Ascending aorta (tissue), 2 donors: ENCODE measurements at regions of chr16 and their contacts with region 1.

Region 1: DNA sequence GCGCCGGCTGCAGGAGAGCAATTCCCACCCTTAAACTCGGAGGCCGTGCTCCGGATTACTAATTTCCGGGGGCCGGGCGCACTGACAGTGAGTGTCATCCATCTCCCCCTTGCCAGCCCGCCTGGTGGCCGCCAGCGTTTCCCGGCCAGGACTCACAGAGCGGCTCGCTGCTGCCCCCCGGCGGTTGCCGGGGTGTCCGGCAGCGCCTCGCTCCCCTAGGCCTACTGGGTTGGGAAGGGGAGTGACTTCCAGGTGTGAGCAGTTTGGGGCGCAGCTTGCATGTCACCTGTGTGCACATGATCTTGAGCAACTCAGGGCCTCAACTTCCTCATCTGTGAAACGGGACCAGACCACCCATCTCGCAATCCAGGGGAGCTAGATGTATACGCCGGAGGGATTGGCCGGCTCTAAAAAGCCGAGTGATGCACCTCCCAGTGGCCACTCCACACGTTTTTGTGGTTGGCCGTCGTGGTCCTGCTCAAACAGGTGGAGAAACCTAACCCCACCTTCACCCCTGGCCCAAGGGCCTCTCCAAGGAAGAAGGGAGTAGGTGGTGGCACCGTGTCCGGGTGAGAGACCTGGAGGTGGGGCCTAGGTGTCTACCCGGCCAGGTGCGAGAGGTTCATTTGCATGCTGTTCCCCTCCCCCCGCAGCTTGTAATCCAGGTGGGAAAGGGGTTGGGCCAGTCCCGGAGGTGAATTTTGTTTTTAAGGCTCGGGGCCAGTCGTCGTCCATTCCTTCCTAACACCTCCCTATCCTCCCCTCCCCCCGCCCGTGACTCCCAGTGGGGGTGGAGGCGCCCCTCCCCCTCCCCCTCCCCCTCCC is 2.4 kb upstream of the GSE1 start:
- DNase-seq: peak; percentile 40 to 93
- H3K4me3 ChIP-seq: peak overlapping the region; percentile 64 to 83
- H3K27ac ChIP-seq: peak overlapping the region; percentile 91 to 92
- H3K4me1 ChIP-seq: peaks cover 17 to 46% of the 10 kb centered on the region in 2 donors
- H3K27me3 ChIP-seq: no peaks in the 10 kb centered on the region
- CTCF ChIP-seq: peak; percentile 98 to 99 (median 99)

Region 2: DNA sequence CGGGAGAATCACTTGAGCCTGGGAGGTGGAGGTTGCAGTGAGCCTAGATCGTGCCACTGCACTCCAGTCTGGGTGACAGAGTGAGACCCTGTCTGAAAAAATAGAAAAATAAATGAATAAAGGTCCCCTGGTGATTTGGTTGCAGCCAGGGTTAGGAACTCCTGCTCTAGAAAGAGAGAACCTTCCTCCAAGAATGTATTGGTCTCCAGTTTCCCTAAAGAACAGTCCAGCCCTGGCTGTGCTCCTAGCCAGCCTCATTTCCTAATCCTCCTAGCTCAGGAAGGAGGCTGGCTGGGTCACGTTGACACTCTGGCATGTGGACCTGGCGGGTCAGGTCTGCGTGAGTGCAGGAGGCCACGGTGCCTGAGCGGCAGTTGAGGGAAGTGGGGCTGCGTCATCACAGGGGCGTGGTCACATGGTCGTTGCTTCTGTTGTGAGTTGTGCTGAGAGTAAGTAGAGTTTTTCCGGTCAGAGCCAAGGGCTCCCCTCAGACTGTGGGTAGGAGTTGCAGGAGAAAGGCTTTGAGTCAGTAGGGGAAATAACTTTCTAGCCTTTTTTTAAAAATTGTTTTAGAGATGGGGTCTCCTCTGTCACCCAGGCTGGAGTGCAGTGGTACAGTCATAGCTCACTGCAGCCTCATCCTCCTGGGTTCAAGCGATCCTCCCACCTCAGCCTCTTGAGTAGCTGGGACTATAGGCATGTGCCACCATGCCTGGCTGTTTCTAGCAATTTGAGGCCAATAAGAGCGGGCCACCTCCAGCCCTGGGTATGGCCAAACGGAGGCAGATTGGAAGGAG is 304.5 kb before region 1 on chr16:
- intact Hi-C with region 1: loop called (anchors 5 kb)
- DNase-seq: peak; percentile 87 to 96
- H3K4me3 ChIP-seq: no peak overlapping the region
- H3K27ac ChIP-seq: peak overlapping the region; percentile 27 to 49
- H3K4me1 ChIP-seq: peaks cover 3 to 29% of the 10 kb centered on the region in 2 donors
- H3K27me3 ChIP-seq: no peaks in the 10 kb centered on the region
- CTCF ChIP-seq: no peak

Region 3: GRCh38 chr16:85393674-85394483 is 216.8 kb before region 1 on chr16:
- intact Hi-C with region 1: loop called (anchors 1 kb)
- DNase-seq: peak in 1 of 2 donors; percentile 67
- H3K4me3 ChIP-seq: no peak overlapping the region
- H3K27ac ChIP-seq: peak overlapping the region in 1 of 2 donors; percentile 9
- H3K4me1 ChIP-seq: peaks cover 17 to 26% of the 10 kb centered on the region in 2 donors
- H3K27me3 ChIP-seq: no peaks in the 10 kb centered on the region
- CTCF ChIP-seq: peak; percentile 63 to 69 (median 67)

Region 4: DNA sequence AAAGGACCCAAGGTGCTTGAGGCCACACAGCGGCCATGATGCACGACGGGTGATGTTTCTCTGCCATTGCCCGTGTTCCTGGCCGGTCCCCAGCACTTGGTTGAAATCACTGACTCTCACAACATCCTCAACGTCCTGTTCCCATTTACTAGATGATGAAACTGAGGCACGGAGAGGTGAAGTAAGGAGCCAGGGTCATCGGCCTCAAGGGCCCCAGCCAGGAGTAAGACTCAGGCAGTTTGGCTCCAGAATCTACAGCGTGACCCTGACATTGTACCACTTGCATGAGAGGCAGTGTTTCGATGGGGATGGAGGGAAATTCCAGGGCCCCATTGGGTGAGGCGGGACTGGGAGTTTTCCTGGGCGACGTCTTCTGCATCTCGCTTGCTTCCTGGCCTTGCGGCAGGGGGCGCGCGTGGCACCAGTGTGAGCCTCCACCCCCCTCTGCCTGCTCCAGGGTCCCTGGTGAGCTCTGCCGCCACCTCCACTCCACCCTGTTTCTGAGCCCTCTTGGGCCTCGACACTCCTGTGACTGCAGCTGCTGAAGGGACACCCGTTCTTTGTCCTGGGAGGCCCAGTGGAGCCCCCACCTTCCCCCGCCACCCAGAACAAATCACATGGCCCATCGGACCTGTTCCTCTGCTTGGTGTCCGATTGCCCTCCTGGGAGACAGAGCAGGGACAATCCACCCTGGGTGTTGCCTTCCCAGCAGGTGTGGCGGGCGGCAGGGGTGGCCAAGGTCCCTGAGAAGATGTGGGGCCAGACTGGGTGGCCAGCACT is 130.6 kb before region 1 on chr16:
- intact Hi-C with region 1: loop called (anchors 1 kb)
- DNase-seq: no peak
- H3K4me3 ChIP-seq: no peak overlapping the region
- H3K27ac ChIP-seq: no peak overlapping the region
- H3K4me1 ChIP-seq: peaks cover 0 to 3% of the 10 kb centered on the region in 2 donors
- H3K27me3 ChIP-seq: no peaks in the 10 kb centered on the region
- CTCF ChIP-seq: peak; percentile 18 to 47 (median 19)

Region 5: GRCh38 chr16:85554112-85554813 is 56.5 kb before region 1 on chr16:
- intact Hi-C with region 1: loop called (anchors 1 kb)
- DNase-seq: peak; percentile 54 to 86
- H3K4me3 ChIP-seq: peak overlapping the region; percentile 76 to 96
- H3K27ac ChIP-seq: peak overlapping the region; percentile 72 to 89
- H3K4me1 ChIP-seq: peaks cover 0 to 16% of the 10 kb centered on the region in 2 donors
- H3K27me3 ChIP-seq: no peaks in the 10 kb centered on the region
- CTCF ChIP-seq: no peak

Region 6: GRCh38 chr16:85707528-85708321 is 97.0 kb after region 1 on chr16:
- intact Hi-C with region 1: no loop called
- DNase-seq: no peak
- H3K4me3 ChIP-seq: no peak overlapping the region
- H3K27ac ChIP-seq: no peak overlapping the region
- H3K4me1 ChIP-seq: no peaks in the 10 kb centered on the region
- H3K27me3 ChIP-seq: no peaks in the 10 kb centered on the region
- CTCF ChIP-seq: no peak